PC-9 (cell line): ENCODE measurements at regions of chr2 and their contacts with region 1.

Region 1: GRCh38 chr2:110741491-110741980 is 9.2 kb downstream of the ACOXL start:
- DNase-seq: peak; percentile 80 to 95
- H3K4me3 ChIP-seq: peak overlapping the region; percentile 46; the same call in 1 of the 2 replicates
- H3K27ac ChIP-seq: peak overlapping the region; percentile 97
- H3K4me1 ChIP-seq: peaks cover 54% of the 10 kb centered on the region
- H3K27me3 ChIP-seq: no peaks in the 10 kb centered on the region
- CTCF ChIP-seq: peak; percentile 45; the same call in 1 of the 2 replicates

Region 2: DNA sequence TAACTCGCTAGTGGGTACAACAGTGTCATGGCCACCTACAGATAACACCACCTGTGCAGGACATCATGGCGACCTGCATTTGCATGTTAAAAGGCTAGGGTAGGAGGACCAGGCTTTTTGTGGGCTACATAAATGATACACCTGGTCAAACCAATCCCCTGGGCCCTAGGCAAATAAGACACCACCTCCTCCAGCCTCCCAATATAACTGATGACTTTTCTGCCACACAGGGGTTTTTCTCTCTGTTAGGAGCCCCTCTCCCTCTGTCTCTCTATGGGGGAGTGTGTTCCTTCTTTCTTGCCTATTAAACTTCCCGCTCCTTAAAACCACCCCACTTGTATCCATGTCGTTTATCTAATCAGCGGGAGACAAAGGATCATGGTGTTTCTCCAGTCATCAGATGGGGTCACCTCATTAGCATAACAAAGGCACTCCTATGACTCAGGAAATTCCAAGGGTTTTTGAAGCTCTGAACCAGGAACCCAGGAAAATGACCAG is 52.9 kb before region 1 on chr2:
- CTCF ChIA-PET with region 1: no interaction called
- POLR2A ChIA-PET with region 1: no interaction called
- intact Hi-C with region 1: loop called (anchors 5 kb)
- DNase-seq: no peak
- H3K4me3 ChIP-seq: no peak overlapping the region
- H3K27ac ChIP-seq: no peak overlapping the region
- H3K4me1 ChIP-seq: no peaks in the 10 kb centered on the region; the same call in 1 of the 2 replicates
- H3K27me3 ChIP-seq: no peaks in the 10 kb centered on the region
- CTCF ChIP-seq: no peak

Region 3: GRCh38 chr2:110804915-110805314 is 63.4 kb after region 1 on chr2:
- CTCF ChIA-PET with region 1: no interaction called
- POLR2A ChIA-PET with region 1: no interaction called
- intact Hi-C with region 1: no loop called
- DNase-seq: no peak
- H3K4me3 ChIP-seq: no peak overlapping the region
- H3K27ac ChIP-seq: no peak overlapping the region
- H3K4me1 ChIP-seq: no peaks in the 10 kb centered on the region
- H3K27me3 ChIP-seq: no peaks in the 10 kb centered on the region
- CTCF ChIP-seq: no peak

Region 4: GRCh38 chr2:110818767-110819481 is 77.4 kb after region 1 on chr2:
- CTCF ChIA-PET with region 1: no interaction called
- POLR2A ChIA-PET with region 1: no interaction called
- intact Hi-C with region 1: no loop called
- DNase-seq: no peak
- H3K4me3 ChIP-seq: no peak overlapping the region
- H3K27ac ChIP-seq: no peak overlapping the region
- H3K4me1 ChIP-seq: no peaks in the 10 kb centered on the region
- H3K27me3 ChIP-seq: no peaks in the 10 kb centered on the region
- CTCF ChIP-seq: no peak; the same call in 1 of the 2 replicates

Region 5: DNA sequence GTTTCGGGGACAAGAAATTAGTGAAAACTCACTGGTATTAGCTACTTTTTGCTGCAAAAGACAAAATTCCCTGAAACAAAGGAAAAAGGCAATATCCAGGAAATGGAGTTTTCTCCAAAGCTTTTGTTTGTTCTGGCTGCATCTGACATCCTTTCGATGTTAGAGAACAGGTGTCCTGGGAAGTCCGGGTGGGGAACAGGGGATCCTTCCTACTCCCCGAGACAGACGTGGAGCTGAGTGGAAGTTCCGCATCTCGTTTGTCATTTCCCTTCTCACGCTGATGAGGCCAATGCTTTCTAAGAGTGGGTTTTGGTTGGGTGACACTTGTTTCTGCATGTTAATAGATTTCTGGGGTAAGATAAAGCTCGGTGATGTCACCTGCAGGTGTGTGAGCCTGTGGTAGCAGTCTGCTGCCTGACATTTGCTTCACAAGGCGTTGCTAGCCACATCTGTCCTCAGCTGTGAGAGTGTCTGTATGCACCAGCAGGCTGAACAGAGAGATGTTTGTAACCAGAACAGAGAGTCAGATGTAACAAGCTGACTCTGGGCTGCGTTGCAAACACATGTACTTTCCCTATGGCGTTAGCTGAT is 116.7 kb after region 1 on chr2:
- CTCF ChIA-PET with region 1: no interaction called
- POLR2A ChIA-PET with region 1: no interaction called
- intact Hi-C with region 1: no loop called
- DNase-seq: no peak
- H3K4me3 ChIP-seq: no peak overlapping the region
- H3K27ac ChIP-seq: no peak overlapping the region
- H3K4me1 ChIP-seq: no peaks in the 10 kb centered on the region
- H3K27me3 ChIP-seq: no peaks in the 10 kb centered on the region
- CTCF ChIP-seq: no peak

Region 6: DNA sequence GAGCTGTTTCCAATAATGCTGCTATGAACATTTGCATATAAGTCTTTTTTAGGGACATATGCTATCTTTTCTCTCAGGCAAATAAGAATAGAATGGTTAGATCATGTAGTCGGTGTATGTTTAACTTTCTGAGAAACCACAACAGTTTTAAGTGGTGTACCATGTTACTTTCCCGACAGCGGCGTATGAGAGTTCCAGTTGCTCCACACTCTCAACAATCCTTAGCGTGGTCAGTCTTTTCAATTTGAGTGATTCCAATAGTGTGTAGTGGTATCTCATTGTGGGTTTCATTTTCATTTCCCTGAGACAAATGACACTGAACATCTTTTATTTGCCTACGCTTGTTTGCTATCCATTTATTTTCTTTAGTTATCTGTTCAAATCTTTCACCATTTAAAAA is 140.4 kb after region 1 on chr2:
- CTCF ChIA-PET with region 1: no interaction called
- POLR2A ChIA-PET with region 1: no interaction called
- intact Hi-C with region 1: no loop called
- DNase-seq: no peak
- H3K4me3 ChIP-seq: no peak overlapping the region
- H3K27ac ChIP-seq: no peak overlapping the region
- H3K4me1 ChIP-seq: no peaks in the 10 kb centered on the region
- H3K27me3 ChIP-seq: no peaks in the 10 kb centered on the region
- CTCF ChIP-seq: no peak